CD4-positive, alpha-beta memory T cell (primary cell): ENCODE measurements at regions of chr4 and their contacts with region 1.

Region 1: GRCh38 chr4:55948726-55949474 is at the start of gene CEP135:
- DNase-seq: peak; percentile 91 to 94 (median 93)
- H3K4me3 ChIP-seq: peak within 1 kb of the TSS; percentile 54 to 65
- H3K4me3 Mint-ChIP-seq: peak within 1 kb of the TSS; percentile 88 to 97 (median 94)
- H3K27ac ChIP-seq: peak within 1 kb of the TSS; percentile 71
- H3K27ac Mint-ChIP-seq: peak within 1 kb of the TSS; percentile 93 to 98 (median 97)
- H3K4me1 ChIP-seq: peaks cover 45% of the 10 kb centered on the region
- H3K4me1 Mint-ChIP-seq: peaks cover 32 to 58% (median 48%) of the 10 kb centered on the region in 4 donors
- H3K27me3 ChIP-seq: no peaks in the 10 kb centered on the region
- H3K27me3 Mint-ChIP-seq: no peaks in the 10 kb centered on the region
- total RNA-seq, gene CEP135: 32.5 to 35.9 TPM

Region 2: DNA sequence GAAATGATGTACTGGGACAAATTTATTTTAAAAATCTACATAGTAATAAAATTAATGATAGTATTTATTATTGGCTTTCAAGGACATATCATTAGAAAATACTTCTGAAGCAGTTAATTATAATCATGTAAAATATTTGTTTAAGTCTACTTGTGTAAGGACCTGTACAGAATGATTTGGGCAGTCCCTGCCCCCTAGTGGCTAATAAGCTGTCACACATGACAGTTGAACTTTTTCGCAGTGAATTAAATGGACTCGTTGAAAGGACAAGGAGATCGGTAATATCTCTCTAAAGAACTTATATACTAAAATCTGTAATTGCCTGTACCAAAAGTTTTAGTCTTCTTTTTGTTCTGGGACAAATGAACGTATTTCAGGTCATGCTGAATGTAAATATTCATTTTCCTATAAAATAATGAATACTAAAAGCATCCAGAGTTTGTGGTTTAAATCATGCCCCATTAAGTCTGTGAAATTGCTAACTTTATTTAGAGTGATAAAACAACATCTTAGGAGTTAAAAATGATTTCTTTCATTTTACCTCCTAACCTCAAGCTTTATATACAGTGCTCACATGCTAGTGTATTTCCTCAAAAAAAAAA is 81.8 kb before region 1 on chr4:
- CTCF ChIA-PET with region 1: interaction called, 17 read pairs
- POLR2A ChIA-PET with region 1: interaction called, 8 read pairs
- intact Hi-C with region 1: no loop called
- DNase-seq: peak in 4 of 5 donors; percentile 50 to 60 (median 51)
- H3K4me3 ChIP-seq: no peak overlapping the region
- H3K4me3 Mint-ChIP-seq: peak overlapping the region in 1 of 8 donors; percentile 37
- H3K27ac ChIP-seq: no peak overlapping the region
- H3K27ac Mint-ChIP-seq: peak overlapping the region in 2 of 7 donors; percentile 67 to 76
- H3K4me1 ChIP-seq: peaks cover 14% of the 10 kb centered on the region
- H3K4me1 Mint-ChIP-seq: peaks cover 8 to 19% (median 17%) of the 10 kb centered on the region in 4 donors
- H3K27me3 ChIP-seq: no peaks in the 10 kb centered on the region
- H3K27me3 Mint-ChIP-seq: no peaks in the 10 kb centered on the region

Region 3: GRCh38 chr4:55906999-55907398 is 41.9 kb before region 1 on chr4:
- CTCF ChIA-PET with region 1: interaction called, 14 read pairs
- POLR2A ChIA-PET with region 1: interaction called, 3 read pairs
- intact Hi-C with region 1: loop called (anchors 2 kb)
- DNase-seq: peak in 4 of 5 donors; percentile 4 to 40 (median 11)
- H3K4me3 ChIP-seq: peak overlapping the region in 1 of 2 donors; percentile 43
- H3K4me3 Mint-ChIP-seq: peak overlapping the region; percentile 65 to 84 (median 74)
- H3K27ac ChIP-seq: no peak overlapping the region
- H3K27ac Mint-ChIP-seq: peak overlapping the region in 6 of 7 donors; percentile 59 to 89 (median 73)
- H3K4me1 ChIP-seq: peaks cover 8% of the 10 kb centered on the region
- H3K4me1 Mint-ChIP-seq: peaks cover 12 to 25% (median 19%) of the 10 kb centered on the region in 4 donors
- H3K27me3 ChIP-seq: no peaks in the 10 kb centered on the region
- H3K27me3 Mint-ChIP-seq: no peaks in the 10 kb centered on the region

Region 4: GRCh38 chr4:55965585-55965984 is 16.7 kb after region 1 on chr4:
- CTCF ChIA-PET with region 1: interaction called, 14 read pairs
- POLR2A ChIA-PET with region 1: interaction called, 4 read pairs
- intact Hi-C with region 1: no loop called
- DNase-seq: no peak
- H3K4me3 ChIP-seq: no peak overlapping the region
- H3K4me3 Mint-ChIP-seq: no peak overlapping the region
- H3K27ac ChIP-seq: no peak overlapping the region
- H3K27ac Mint-ChIP-seq: peak overlapping the region in 1 of 7 donors; percentile 24
- H3K4me1 ChIP-seq: no peaks in the 10 kb centered on the region
- H3K4me1 Mint-ChIP-seq: peaks cover 0 to 8% (median 5%) of the 10 kb centered on the region in 4 donors
- H3K27me3 ChIP-seq: no peaks in the 10 kb centered on the region
- H3K27me3 Mint-ChIP-seq: no peaks in the 10 kb centered on the region

Region 5: GRCh38 chr4:56387023-56388001 is 438.4 kb after region 1 on chr4 and contains the start of gene AASDH:
- CTCF ChIA-PET with region 1: interaction called, 10 read pairs
- POLR2A ChIA-PET with region 1: interaction called, 20 read pairs
- intact Hi-C with region 1: loop called (anchors 1 kb)
- DNase-seq: peak; percentile 94 to 96 (median 95)
- H3K4me3 ChIP-seq: peak within 1 kb of the TSS; percentile 63 to 94
- H3K4me3 Mint-ChIP-seq: peak within 1 kb of the TSS; percentile 91 to 100 (median 96)
- H3K27ac ChIP-seq: peak within 1 kb of the TSS; percentile 81
- H3K27ac Mint-ChIP-seq: peak within 1 kb of the TSS; percentile 98 to 100 (median 99)
- H3K4me1 ChIP-seq: peaks cover 20% of the 10 kb centered on the region
- H3K4me1 Mint-ChIP-seq: peaks cover 21 to 48% (median 37%) of the 10 kb centered on the region in 4 donors
- H3K27me3 ChIP-seq: no peaks in the 10 kb centered on the region
- H3K27me3 Mint-ChIP-seq: no peaks in the 10 kb centered on the region
- total RNA-seq, gene AASDH: 19.2 to 23.7 TPM

Region 6: GRCh38 chr4:56907489-56908205 is 958.7 kb after region 1 on chr4 and contains the start of gene REST:
- CTCF ChIA-PET with region 1: interaction called, 4 read pairs
- POLR2A ChIA-PET with region 1: interaction called, 22 read pairs
- intact Hi-C with region 1: loop called (anchors 1 kb)
- DNase-seq: peak; percentile 80 to 91 (median 86)
- H3K4me3 ChIP-seq: peak within 1 kb of the TSS; percentile 58 to 79
- H3K4me3 Mint-ChIP-seq: peak within 1 kb of the TSS; percentile 89 to 97 (median 93)
- H3K27ac ChIP-seq: peak within 1 kb of the TSS; percentile 85
- H3K27ac Mint-ChIP-seq: peak within 1 kb of the TSS; percentile 87 to 97 (median 93)
- H3K4me1 ChIP-seq: peaks cover 42% of the 10 kb centered on the region
- H3K4me1 Mint-ChIP-seq: peaks cover 30 to 54% (median 43%) of the 10 kb centered on the region in 4 donors
- H3K27me3 ChIP-seq: no peaks in the 10 kb centered on the region
- H3K27me3 Mint-ChIP-seq: no peaks in the 10 kb centered on the region
- total RNA-seq, gene REST: 77.3 to 79.2 TPM

Region 7: GRCh38 chr4:57163530-57164459 is 1214.9 kb after region 1 on chr4:
- CTCF ChIA-PET with region 1: no interaction called
- POLR2A ChIA-PET with region 1: no interaction called
- intact Hi-C with region 1: no loop called
- DNase-seq: peak; percentile 41 to 61 (median 56)
- H3K4me3 ChIP-seq: peak overlapping the region; percentile 76 to 87
- H3K4me3 Mint-ChIP-seq: peak overlapping the region; percentile 77 to 93 (median 90)
- H3K27ac ChIP-seq: no peak overlapping the region
- H3K27ac Mint-ChIP-seq: peak overlapping the region in 4 of 7 donors; percentile 15 to 74 (median 52)
- H3K4me1 ChIP-seq: peaks cover 4% of the 10 kb centered on the region
- H3K4me1 Mint-ChIP-seq: peaks cover 6 to 16% (median 9%) of the 10 kb centered on the region in 4 donors
- H3K27me3 ChIP-seq: no peaks in the 10 kb centered on the region
- H3K27me3 Mint-ChIP-seq: peaks cover 16 to 18% of the 10 kb centered on the region in 2 donors